Breast epithelium (tissue), 4 donors: ENCODE measurements at regions of chr15 and their contacts with region 1.

Region 1: DNA sequence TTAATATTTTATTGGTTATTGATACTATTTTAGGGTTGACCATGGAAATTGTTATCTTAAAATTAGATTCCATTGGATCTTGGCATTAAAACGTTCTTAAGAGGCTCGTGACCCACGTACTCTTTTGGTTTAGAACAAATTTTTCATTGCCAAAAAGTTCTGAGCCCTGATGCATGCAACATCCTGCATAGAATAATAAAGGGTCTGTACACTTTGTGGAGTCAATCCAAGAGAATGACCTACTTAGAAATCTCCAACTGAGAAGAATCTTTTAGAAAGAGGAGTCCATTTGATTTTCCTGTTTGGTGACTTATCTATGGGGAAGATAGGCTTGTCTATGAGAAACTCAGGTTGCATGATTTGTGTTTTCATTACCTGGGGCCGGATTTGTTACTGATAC is 404.2 kb upstream of the RGMA start:
- DNase-seq: no peak
- H3K4me3 ChIP-seq: no peak overlapping the region
- H3K27ac ChIP-seq: no peak overlapping the region
- H3K4me1 ChIP-seq: no peaks in the 10 kb centered on the region
- H3K27me3 ChIP-seq: no peaks in the 10 kb centered on the region
- CTCF ChIP-seq: no peak
- POLR2A ChIP-seq: no peak

Region 2: DNA sequence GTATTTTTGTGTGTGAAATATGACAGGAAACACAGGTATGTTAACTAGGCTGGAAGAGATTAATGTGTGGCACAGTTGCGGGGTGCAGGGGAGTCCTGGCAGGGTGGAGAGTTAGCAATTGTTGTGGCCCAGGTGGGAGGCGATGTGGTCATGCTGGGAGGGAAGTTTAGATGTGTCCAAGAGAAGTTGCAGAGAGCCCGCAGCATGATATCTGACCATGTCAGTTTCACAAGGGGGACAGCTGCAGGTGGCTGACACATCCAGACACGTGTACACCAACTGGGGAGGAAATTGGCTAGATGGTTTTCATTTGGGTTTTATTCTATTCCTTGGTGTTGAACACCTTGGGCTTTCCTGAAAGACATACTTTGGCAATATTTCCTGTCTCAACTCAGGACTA is 231.3 kb before region 1 on chr15:
- intact Hi-C with region 1: loop called (anchors 5 kb)
- DNase-seq: no peak
- H3K4me3 ChIP-seq: no peak overlapping the region
- H3K27ac ChIP-seq: no peak overlapping the region
- H3K4me1 ChIP-seq: no peaks in the 10 kb centered on the region
- H3K27me3 ChIP-seq: no peaks in the 10 kb centered on the region
- CTCF ChIP-seq: no peak
- POLR2A ChIP-seq: no peak

Region 3: DNA sequence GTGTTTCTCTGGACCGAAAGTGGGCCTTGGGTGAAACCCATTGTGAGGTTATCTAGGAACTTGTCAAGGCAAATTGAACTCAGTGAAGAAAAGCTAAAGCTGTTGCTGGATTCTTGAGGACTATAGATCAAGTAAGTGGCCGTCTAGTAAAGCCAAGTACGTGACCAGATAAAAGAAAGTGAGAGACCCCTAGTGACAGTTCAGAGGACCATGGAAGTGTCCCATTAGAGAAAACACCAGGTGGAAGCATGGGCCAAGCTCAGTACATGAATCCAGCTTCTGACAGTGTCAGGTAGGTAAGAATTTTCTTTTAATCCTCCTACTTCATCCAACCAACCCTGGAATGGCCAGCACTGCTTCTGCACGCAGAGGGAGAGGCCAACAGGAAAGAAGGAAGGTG is 54.9 kb before region 1 on chr15:
- intact Hi-C with region 1: no loop called
- DNase-seq: no peak
- H3K4me3 ChIP-seq: no peak overlapping the region
- H3K27ac ChIP-seq: no peak overlapping the region
- H3K4me1 ChIP-seq: no peaks in the 10 kb centered on the region
- H3K27me3 ChIP-seq: no peaks in the 10 kb centered on the region
- CTCF ChIP-seq: no peak
- POLR2A ChIP-seq: no peak